BJ (cell line): ENCODE measurements at regions of chr17 and their contacts with region 1.

Region 1: GRCh38 chr17:37640015-37640414 is 3.2 kb downstream of the DDX52 start:
- DNase-seq: no peak
- H3K4me3 ChIP-seq: no peak overlapping the region
- H3K27me3 ChIP-seq: no peaks in the 10 kb centered on the region
- CTCF ChIP-seq: no peak

Region 2: GRCh38 chr17:36948717-36949460 is 691.1 kb before region 1 on chr17 and contains the start of gene AATF:
- CTCF ChIA-PET with region 1: no interaction called
- POLR2A ChIA-PET with region 1: no interaction called
- DNase-seq: peak; percentile 69
- H3K4me3 ChIP-seq: peak within 1 kb of the TSS; percentile 85
- H3K27me3 ChIP-seq: peaks cover 26% of the 10 kb centered on the region
- CTCF ChIP-seq: no peak
- polyA plus RNA-seq, gene AATF: 16.7 and 18.5 TPM in 2 replicates

Region 3: GRCh38 chr17:37130984-37131446 is 509.0 kb before region 1 on chr17:
- CTCF ChIA-PET with region 1: no interaction called
- POLR2A ChIA-PET with region 1: no interaction called
- DNase-seq: no peak
- H3K4me3 ChIP-seq: no peak overlapping the region
- H3K27me3 ChIP-seq: no peaks in the 10 kb centered on the region
- CTCF ChIP-seq: no peak

Region 4: DNA sequence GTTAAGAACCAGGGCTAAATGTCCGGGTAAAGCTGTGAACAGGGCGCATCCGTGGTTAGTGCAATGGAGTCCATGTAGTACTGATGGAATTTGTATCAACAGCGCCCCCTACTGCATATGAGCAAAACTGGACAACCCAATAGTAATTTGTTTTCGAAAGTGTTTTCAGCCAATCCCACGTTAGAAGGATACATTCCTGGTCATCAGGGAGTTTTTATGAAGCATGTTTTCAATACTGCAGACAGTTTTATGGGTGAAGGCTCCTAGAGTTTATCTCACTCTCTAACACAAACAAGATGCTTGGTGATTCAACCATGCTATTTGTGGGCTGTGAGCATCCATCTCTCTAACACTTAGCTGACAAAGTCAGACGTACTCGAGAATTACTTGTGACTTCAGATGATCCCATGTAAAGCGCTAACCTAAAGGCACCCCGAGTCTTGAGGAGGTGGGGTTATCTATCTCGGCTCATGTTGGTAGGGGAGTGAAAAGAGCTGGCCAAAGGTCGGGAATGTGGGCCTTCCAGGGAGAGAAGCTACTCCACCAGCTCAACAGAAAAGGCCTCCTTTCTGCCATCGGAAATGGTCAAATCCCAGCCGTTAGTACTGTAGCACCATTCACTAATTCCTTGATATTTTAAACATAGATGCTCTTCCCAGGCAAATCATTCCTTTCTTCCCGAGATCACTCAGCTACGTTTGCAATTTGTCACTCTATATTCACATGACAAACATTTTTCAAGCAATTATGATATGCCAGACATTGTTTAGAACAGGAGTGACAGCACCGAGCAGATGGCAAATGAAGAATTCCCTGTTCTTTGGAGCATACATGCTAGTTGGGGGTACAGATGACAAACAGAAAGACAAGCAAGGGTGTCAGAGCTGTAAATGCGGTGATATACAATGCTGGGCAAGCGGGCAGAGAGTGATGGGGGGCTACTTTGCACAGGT is 151.7 kb after region 1 on chr17:
- CTCF ChIA-PET with region 1: no interaction called
- POLR2A ChIA-PET with region 1: no interaction called
- DNase-seq: peak; percentile 65
- H3K4me3 ChIP-seq: no peak overlapping the region
- H3K27me3 ChIP-seq: 0 out of 2 replicates have a peak, but pooled peaks cover 4% of the 10 kb centered on the region
- CTCF ChIP-seq: peak; percentile 59

Region 5: DNA sequence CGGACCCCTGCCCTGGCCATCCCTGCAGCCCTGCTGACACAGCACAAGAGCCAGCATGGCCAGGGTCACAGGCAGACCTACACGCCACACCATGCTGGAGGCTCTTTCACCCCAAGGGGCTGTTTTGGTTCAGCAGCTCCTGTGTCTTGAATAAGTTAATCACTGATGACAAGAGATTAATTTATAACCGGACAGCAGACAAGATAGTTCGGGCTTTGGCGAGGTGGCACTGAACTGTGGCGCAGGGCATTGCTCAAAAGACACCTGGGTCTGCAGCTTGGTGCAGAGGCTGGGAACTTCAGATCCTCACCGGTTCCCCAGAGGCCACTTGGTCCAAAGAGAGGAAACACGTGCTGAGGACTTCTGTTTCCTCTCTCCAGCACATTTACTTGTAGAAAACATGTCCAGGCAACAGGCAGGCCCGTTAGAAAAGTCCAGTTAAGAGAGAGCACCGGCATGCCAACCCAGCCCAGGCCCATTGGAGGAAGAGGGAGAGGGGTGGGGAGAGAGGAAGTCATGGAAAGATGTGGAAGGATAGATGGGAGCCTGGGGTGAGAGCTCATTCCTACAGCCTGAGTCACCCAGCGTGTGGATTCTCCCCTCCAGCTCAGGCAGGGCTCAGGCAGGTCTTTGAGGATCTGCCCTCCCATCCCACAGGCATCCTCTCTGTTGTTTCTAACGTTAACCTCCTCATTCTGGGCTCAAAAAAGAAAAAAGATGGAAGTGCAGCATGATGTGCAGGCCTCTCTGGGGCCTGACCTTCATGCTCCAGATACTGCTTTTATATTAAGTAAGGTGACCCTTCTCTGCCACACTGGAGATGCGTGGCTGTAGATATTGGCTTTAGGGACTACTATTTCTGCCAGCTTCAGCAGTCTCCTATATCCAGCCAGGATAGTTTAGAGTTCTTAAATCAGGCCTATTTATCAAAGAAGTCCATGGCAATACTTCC is 184.8 kb after region 1 on chr17:
- CTCF ChIA-PET with region 1: no interaction called
- POLR2A ChIA-PET with region 1: interaction called, 17 read pairs
- DNase-seq: peak; percentile 47
- H3K4me3 ChIP-seq: no peak overlapping the region
- H3K27me3 ChIP-seq: no peaks in the 10 kb centered on the region
- CTCF ChIP-seq: no peak